ENCODE measurements at regions of chr4 and their contacts with region 1.

Region 1: GRCh38 chr4:15655229-15656037 is at the start of gene FBXL5:
- DNase-seq: peak; percentile 96
- H3K4me3 ChIP-seq: peak within 1 kb of the TSS; percentile 61 to 92 (median 77)
- H3K27ac ChIP-seq: peak within 1 kb of the TSS; percentile 97 to 99 (median 99)
- H3K4me1 ChIP-seq: peaks cover 30 to 79% (median 47%) of the 10 kb centered on the region in 6 donors
- H3K27me3 ChIP-seq: no peaks in the 10 kb centered on the region
- CTCF ChIP-seq: peak in 1 of 11 experiments; percentile 19
- POLR2A ChIP-seq: peak; percentile 23 to 84 (median 27)
- total RNA-seq, gene FBXL5: 98.2 to 210 (median 141) TPM

Region 2: GRCh38 chr4:15001869-15002658 is 653.4 kb before region 1 on chr4 and contains the start of gene CPEB2:
- intact Hi-C with region 1: loop called (anchors 10 kb)
- DNase-seq: peak; percentile 99
- H3K4me3 ChIP-seq: peak within 1 kb of the TSS; percentile 68 to 96 (median 86)
- H3K27ac ChIP-seq: peak within 1 kb of the TSS; percentile 95 to 100 (median 100)
- H3K4me1 ChIP-seq: peaks cover 0 to 33% (median 29%) of the 10 kb centered on the region in 6 donors
- H3K27me3 ChIP-seq: no peaks in the 10 kb centered on the region
- CTCF ChIP-seq: peak in 4 of 11 experiments; percentile 10 to 34 (median 24)
- POLR2A ChIP-seq: peak; percentile 95 to 98 (median 96)
- total RNA-seq, gene CPEB2: 15.3 to 21.8 (median 17.9) TPM